Gastrocnemius medialis (tissue), 4 donors: ENCODE measurements at regions of chr17 and their contacts with region 1.

Region 1: DNA sequence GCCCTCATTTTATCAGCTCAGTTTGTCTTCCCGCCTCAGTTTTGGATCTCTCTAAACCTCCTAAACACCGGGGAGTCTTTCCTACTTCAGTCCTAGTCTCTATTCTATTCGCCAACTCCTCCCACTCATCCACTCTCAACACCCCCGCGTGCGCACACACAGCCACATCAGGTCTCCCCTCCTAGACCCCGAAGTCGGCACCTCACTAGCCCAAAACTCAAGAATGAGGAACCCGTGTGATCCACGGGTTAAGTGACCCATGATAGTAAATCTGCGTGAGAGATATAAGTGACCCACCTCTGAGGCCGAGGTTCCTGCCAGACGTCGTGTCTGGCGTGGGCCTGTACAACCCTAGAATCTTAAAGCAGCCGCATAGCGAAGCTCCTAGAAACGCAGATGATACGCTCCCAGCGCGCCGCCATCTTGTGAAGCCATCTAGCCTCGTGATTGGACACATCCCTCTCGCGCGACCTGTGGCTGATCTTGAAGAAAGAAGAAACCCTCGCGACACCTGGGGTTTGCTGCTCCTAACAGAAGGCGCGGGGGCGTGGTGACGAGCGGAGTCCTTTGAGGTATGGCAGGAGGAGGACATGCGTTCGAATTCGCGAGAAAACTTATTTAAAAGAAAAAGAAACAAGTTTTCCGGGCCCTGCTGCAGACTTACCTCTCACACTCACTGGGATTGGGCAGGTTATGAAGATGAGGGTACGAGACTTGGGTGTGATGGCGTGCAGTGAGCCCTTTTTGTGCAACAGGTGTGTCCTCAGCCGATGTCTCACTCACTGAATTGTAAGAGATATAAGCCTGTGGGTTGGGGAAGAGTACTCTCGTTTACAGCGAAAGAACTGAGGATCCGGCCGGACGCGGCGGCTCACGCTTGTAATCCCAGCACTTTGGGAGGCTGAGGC is at the start of gene METTL16:
- DNase-seq: peak; percentile 95 to 96
- ATAC-seq: peak; percentile 100
- H3K4me3 ChIP-seq: peak within 1 kb of the TSS; percentile 66 to 81 (median 74)
- H3K27ac ChIP-seq: peak within 1 kb of the TSS; percentile 86 to 88 (median 88)
- H3K4me1 ChIP-seq: peaks cover 18 to 26% of the 10 kb centered on the region in 2 donors
- H3K27me3 ChIP-seq: no peaks in the 10 kb centered on the region
- CTCF ChIP-seq: no peak
- POLR2A ChIP-seq: peak; percentile 59 to 68
- total RNA-seq, gene METTL16: 18.2 to 59.7 (median 25.4) TPM

Region 2: GRCh38 chr17:2468270-2468669 is 43.4 kb before region 1 on chr17:
- in situ Hi-C with region 1: no loop called
- intact Hi-C with region 1: no loop called
- DNase-seq: no peak
- ATAC-seq: no peak
- H3K4me3 ChIP-seq: no peak overlapping the region
- H3K27ac ChIP-seq: no peak overlapping the region
- H3K4me1 ChIP-seq: no peaks in the 10 kb centered on the region
- H3K27me3 ChIP-seq: no peaks in the 10 kb centered on the region
- CTCF ChIP-seq: no peak
- POLR2A ChIP-seq: no peak

Region 3: DNA sequence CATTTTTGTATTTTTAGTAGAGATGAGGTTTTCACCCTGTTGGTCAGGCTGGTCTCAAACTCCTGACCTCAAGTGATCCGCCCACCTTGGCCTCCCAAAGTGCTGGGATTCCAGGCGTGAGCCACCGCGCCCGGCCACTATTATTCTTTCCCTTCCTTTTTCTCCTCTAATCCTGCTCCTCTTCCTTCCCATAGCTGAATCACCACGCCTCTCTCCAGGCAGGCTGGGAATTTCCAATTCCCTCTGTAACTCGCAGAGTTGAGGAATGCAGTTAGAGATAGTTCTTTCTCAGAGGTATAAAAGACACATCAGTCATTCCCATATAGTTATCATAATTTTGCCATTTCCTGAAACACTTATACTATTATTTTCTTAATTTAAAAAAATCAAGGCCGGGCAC is 11.3 kb before region 1 on chr17:
- in situ Hi-C with region 1: no loop called
- intact Hi-C with region 1: no loop called
- DNase-seq: no peak
- ATAC-seq: no peak
- H3K4me3 ChIP-seq: no peak overlapping the region
- H3K27ac ChIP-seq: no peak overlapping the region
- H3K4me1 ChIP-seq: peaks cover 0 to 5% of the 10 kb centered on the region in 2 donors
- H3K27me3 ChIP-seq: no peaks in the 10 kb centered on the region
- CTCF ChIP-seq: no peak
- POLR2A ChIP-seq: no peak

Region 4: DNA sequence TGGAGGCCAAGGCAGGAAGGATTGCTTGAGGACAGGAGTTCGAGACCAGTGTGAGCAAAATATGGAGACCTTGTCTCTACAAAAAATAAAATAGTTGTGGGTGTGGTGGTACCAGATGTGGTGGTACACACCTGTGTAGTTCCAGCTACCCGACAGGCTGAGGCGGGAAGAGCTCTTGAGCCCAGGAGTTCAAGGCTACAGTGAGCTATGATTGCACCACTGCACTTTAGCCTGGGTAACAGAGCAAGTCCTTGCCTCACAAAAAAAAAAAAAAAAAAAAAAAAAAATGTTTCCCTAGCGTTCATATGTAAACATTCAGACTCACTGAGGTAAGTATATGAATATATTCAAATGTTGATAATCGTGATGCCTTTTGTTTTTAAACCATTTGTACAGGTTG is 160.3 kb after region 1 on chr17:
- in situ Hi-C with region 1: loop called in 1 of 4 experiments (anchors 10 kb)
- intact Hi-C with region 1: no loop called
- DNase-seq: no peak
- ATAC-seq: no peak
- H3K4me3 ChIP-seq: no peak overlapping the region
- H3K27ac ChIP-seq: no peak overlapping the region
- H3K4me1 ChIP-seq: no peaks in the 10 kb centered on the region
- H3K27me3 ChIP-seq: no peaks in the 10 kb centered on the region
- CTCF ChIP-seq: no peak
- POLR2A ChIP-seq: no peak